BJ (cell line): ENCODE measurements at regions of chrX and their contacts with region 1.

Region 1: DNA sequence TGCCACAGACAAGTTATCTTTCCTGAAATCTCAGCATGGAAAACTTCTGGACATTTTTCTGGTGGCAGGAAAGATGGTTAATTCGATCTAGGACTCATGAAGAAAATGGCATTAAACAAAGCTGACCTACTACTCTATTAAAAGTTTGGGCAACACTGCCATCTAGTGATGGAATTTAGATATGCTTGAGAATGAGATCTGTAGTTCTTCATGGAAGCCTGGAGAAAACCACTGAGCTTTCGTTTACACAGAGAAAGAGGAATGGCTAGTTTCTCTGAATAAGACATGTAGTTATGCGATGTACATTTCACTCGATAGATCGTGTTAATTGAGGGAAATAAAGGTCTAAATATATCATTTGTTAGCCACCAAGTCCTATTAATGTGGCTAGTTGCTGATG is 51.7 kb upstream of the CHRDL1 start:
- DNase-seq: no peak
- H3K4me3 ChIP-seq: no peak overlapping the region
- H3K27me3 ChIP-seq: no peaks in the 10 kb centered on the region
- CTCF ChIP-seq: peak; percentile 27; the same call in 1 of the 2 replicates

Region 2: GRCh38 chrX:110450050-110450449 is 397.3 kb before region 1 on chrX:
- CTCF ChIA-PET with region 1: interaction called, 11 read pairs
- POLR2A ChIA-PET with region 1: no interaction called
- DNase-seq: no peak
- H3K4me3 ChIP-seq: no peak overlapping the region
- H3K27me3 ChIP-seq: peaks cover 2% of the 10 kb centered on the region; the same call in 1 of the 2 replicates
- CTCF ChIP-seq: peak; percentile 60

Region 3: DNA sequence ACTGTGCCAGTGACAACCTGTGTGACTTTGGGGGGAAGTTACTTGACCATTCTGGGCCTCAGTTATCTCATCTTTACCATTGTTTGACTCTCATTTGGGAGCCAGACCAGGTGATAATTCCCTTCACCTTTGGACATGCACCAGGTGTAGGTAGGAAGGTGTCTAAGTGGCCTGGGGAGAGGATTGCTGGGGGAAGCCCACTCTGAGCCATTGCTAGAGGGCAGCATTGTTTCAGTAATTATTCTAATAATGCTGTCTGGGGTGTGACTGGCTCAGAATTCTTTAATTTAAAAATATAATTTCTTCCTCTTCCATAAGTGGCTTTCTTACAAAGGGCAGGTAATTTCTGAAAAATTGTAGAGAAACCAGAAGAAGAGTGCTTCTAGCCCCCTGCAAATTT is 384.4 kb before region 1 on chrX:
- CTCF ChIA-PET with region 1: interaction called, 17 read pairs
- POLR2A ChIA-PET with region 1: no interaction called
- DNase-seq: no peak
- H3K4me3 ChIP-seq: no peak overlapping the region
- H3K27me3 ChIP-seq: no peaks in the 10 kb centered on the region
- CTCF ChIP-seq: peak; percentile 22; the same call in 1 of the 2 replicates

Region 4: DNA sequence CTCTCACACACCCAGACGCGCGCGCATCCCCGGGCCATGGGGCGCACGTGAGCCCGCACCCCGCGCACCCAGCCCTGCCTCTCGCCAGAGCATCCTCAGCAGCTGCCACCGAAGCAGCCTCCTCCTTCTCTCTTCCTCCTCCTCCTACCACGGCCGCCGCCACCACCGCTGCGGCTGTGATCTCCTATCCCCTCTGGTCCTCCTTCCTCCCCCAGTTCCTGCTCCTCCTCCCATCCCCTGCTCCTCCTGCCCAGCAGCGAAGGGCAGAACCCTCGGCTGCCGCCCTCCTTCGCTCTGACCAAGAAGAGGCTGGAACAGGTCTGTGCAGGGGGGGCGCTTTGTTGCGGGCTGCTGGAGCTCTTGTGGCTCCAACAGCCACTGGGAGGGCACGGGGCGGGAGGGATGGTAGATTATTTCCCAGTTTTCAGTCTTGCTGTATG is 97.0 kb after region 1 on chrX:
- CTCF ChIA-PET with region 1: no interaction called
- POLR2A ChIA-PET with region 1: no interaction called
- DNase-seq: no peak
- H3K4me3 ChIP-seq: no peak overlapping the region
- H3K27me3 ChIP-seq: no peaks in the 10 kb centered on the region
- CTCF ChIP-seq: no peak